ENCODE measurements at regions of chr4 and their contacts with region 1.

Region 1: DNA sequence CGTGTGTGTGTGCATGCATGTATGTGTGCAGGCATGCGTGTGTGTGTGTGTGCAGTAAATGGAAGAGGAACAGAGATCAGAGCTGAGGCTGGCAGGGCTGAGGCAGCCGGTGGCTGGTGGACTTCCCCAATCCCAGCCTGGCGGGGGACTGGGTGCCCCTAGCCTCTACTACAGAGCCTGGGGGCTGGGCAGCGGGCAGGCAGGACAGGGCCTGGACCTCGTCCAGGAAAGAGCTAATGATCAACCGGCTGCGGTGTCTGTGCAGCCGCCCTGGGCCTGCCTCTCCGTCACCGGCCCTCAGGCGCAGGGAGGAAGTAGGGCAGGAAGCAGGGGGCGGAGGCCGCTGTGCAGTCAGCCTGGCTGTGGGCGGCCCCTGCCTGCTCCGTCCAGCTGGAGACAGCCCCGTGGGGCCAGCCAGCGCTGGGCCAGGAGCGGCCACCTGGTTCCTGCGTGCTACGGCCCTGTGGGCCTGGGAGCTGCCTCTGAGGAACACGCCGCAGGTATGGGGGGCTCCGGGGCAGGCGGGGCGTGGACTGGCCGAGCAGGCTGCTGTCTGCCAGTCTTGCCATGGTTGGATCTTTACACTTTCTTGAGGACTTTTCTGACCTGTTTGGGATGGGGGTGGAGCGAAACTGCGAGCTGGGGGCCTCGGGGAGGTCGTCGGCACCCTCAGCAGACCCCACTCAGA is at the start of gene SH3TC1:
- DNase-seq: peak; percentile 83
- H3K4me3 Mint-ChIP-seq: peak within 1 kb of the TSS; percentile 83
- H3K27ac Mint-ChIP-seq: peak within 1 kb of the TSS; percentile 81
- H3K4me1 Mint-ChIP-seq: peaks cover 40% of the 10 kb centered on the region
- H3K27me3 Mint-ChIP-seq: no peaks in the 10 kb centered on the region
- total RNA-seq, gene SH3TC1: 28.5 to 28.8 TPM

Region 2: DNA sequence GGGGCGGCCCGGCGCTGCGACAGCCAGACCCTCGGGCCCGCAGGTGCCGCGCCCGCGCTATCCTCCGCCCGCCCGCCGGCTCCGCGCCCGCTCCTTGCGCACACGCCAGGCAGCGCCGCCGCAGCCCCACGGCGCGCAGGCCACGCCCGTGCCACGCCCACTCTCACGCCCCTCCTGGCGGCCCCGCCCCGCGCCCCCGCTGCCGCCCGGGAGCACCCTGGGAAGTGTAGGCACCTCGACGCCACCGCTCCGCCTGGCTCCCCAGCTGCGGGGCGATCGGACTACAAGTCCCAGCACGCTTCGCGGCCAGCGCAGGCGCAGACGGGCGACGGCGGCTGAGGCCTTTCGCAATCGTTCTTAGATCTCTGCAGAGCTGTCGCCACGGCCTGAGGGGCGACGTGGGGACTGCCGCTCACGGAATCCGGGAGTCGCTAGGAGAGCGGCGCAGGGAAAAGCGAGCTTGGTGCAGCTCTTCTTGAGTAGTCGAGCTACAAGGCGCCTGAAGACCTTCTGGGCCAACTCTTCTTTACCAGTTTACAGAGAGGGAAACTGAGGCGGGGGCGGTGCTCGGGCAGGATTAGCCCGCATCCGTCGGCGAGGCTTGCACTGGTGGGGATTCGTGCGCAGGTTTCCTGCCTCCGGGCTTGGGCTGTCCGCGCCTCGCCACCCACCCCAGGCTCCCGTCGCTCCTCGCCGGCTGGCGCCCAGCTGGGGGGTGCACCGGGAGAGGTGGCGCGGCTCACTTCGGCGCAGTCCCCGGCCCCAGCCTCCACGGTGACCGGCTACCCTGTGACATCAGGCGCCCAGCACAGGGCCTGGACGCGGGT is 40.1 kb before region 1 on chr4 and contains the start of gene ABLIM2:
- CTCF ChIA-PET with region 1: no interaction called
- POLR2A ChIA-PET with region 1: interaction called, 5 read pairs
- intact Hi-C with region 1: loop called (anchors 5 kb)
- DNase-seq: peak; percentile 99
- H3K4me3 Mint-ChIP-seq: peak within 1 kb of the TSS; percentile 99
- H3K27ac Mint-ChIP-seq: peak within 1 kb of the TSS; percentile 57
- H3K4me1 Mint-ChIP-seq: peaks cover 16% of the 10 kb centered on the region
- H3K27me3 Mint-ChIP-seq: peaks cover 5% of the 10 kb centered on the region
- total RNA-seq, gene ABLIM2: 0.55 to 0.63 TPM

Region 3: GRCh38 chr4:8176547-8177399 is 22.3 kb before region 1 on chr4:
- CTCF ChIA-PET with region 1: interaction called, 17 read pairs
- POLR2A ChIA-PET with region 1: no interaction called
- intact Hi-C with region 1: no loop called
- DNase-seq: peak; percentile 64
- H3K4me3 Mint-ChIP-seq: no peak overlapping the region
- H3K27ac Mint-ChIP-seq: no peak overlapping the region
- H3K4me1 Mint-ChIP-seq: peaks cover 5% of the 10 kb centered on the region
- H3K27me3 Mint-ChIP-seq: peaks cover under 1% of the 10 kb centered on the region

Region 4: GRCh38 chr4:8221476-8221875 is 22.4 kb after region 1 on chr4:
- CTCF ChIA-PET with region 1: no interaction called
- POLR2A ChIA-PET with region 1: interaction called, 4 read pairs
- intact Hi-C with region 1: loop called (anchors 2 kb)
- DNase-seq: no peak
- H3K4me3 Mint-ChIP-seq: no peak overlapping the region
- H3K27ac Mint-ChIP-seq: no peak overlapping the region
- H3K4me1 Mint-ChIP-seq: peaks cover 43% of the 10 kb centered on the region
- H3K27me3 Mint-ChIP-seq: no peaks in the 10 kb centered on the region

Region 5: DNA sequence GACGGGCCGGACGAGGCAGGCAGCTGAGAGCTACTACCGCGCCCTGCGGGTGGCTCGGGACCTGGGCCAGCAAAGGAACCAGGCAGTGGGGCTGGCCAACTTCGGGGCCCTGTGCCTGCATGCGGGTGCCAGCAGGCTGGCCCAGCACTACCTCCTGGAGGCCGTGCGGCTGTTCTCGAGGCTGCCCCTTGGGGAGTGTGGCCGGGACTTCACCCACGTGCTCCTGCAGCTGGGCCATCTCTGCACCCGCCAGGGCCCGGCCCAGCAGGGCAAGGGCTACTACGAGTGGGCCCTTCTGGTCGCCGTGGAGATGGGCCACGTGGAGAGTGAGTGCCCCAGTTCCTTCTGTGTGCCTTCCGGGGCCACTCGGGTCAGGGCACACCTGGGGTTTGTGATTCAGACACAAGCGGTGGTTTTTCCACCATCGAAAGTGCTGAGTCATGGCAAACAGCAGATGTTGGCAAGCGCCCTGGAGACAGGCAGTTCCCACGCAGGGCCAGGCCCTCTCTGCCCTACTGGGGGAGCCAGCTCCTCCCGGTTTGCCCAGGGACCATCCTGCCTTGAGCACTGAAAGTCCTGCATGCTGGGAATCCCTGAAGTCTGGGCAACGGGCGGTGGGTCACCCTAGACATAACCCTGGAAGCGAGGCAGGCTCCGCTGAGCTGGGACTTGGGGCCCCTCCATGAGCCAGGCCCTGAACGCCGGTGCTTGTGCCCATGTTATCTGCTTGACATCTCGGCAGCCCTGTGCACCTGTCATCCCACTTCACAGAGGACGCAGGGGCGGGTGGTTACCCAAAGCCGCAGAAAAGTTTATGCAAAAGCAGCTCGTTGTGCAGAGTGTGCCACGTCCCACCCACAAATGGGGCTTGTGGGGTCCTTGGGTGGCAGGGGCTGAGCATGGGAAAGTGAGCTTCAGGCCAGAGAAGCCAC is 29.5 kb after region 1 on chr4:
- CTCF ChIA-PET with region 1: no interaction called
- POLR2A ChIA-PET with region 1: interaction called, 7 read pairs
- intact Hi-C with region 1: loop called (anchors 1 kb)
- DNase-seq: peak; percentile 94
- H3K4me3 Mint-ChIP-seq: no peak overlapping the region
- H3K27ac Mint-ChIP-seq: peak overlapping the region; percentile 66
- H3K4me1 Mint-ChIP-seq: peaks cover 25% of the 10 kb centered on the region
- H3K27me3 Mint-ChIP-seq: no peaks in the 10 kb centered on the region